ENCODE measurements at regions of chr1 and their contacts with region 1.

Region 1: DNA sequence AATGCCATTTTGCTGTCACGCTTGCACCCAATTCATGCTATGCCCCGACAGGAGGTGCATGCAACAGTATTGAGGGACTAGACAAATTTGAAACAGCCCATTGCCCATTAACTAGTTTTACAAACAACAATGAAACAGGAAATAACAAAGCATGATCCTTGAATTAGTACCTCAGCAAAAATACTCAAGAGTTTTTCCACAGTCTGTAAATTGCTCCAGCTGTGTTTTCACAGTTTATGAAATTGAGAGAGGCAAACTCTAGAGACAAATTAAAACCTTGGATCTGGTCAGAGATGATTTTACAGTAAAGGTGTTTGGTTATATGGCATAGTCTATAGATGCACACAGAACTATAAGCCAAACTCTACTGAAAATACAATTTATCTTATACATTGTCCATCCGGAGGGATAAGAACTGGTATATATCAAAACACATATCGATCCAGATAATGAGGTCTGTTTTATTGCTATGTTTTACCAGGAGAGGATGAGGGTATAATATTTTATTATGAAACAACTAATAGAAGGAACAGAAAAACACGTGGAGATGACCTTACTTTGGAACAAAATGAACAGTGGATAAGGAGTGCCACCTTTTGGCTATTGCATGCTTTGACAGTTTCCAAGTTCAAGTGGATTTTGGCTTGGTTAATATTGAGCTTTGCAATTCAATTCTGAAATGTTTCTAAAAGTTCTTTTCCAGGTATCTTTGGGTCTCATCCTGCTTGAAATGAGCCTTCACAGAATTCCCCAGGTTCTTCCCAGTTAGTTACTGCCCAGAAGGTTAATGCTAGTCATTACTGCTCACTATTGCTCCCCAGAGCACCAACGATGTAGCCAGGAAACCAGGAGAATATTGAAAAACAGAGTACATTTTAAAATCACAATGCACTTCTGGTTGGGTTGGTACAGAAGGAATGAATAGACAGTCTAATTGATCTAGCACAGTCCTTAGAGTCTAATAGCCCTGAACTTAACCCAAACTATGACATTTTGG is 45.7 kb downstream of the ZC3H11B start:
- DNase-seq: no peak

Region 2: GRCh38 chr1:218330043-218330623 is 1237.1 kb before region 1 on chr1:
- intact Hi-C with region 1: loop called (anchors 5 kb)
- DNase-seq: no peak

Region 3: DNA sequence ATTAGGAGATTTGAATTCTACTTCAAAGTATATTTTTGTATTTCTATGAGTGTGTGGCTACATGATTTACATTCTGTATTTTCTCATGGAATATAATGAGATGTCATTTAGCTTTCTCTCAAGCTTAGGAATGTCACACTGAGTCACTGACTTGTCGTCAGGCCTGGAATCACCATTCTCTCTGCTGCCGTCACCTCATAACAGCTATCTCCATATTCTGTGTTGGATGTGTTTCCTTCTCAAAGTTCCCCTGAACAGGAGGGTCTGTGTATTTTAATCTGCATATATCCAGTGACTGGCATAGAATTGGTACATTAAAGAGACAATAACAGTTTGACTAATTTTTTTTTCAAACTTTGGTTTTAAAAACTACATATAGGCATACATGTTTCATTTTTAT is 357.7 kb before region 1 on chr1:
- intact Hi-C with region 1: loop called (anchors 10 kb)
- DNase-seq: no peak

Region 4: DNA sequence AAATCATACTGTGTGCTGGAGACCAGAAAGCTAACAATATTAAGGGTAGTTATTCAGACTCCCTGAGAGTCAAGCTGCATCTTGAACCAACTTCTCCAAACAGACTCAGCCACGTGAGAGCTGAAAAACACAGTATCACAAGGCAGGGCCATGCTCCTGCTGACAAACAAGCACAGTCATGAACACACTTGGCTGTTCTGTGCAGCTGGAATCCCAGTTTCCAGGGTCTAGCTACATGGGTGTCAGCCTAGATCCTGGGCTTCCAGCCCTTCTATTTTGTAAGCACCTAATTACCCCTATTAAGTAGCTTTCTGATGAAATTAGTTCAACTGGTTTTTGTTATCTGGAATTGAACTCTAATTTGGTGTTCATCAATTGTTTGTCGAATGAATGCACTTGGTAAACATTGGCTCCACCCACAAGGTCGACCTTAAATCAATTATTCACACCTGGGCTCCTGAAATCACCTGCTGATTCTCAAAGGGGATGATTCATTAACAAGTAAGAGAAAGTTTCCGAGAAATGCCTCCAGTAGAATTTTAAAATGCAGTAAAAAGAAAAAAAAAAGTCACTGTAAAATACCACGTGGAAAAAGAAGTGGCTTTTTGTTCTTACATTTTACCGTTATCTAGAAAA is 133.6 kb before region 1 on chr1:
- intact Hi-C with region 1: no loop called
- DNase-seq: no peak

Region 5: GRCh38 chr1:219805193-219805592 is 237.9 kb after region 1 on chr1:
- intact Hi-C with region 1: loop called (anchors 5 kb)
- DNase-seq: no peak

Measured in cardiac septum (tissue), 1 donor.